ENCODE measurements at regions of chr12 and their contacts with region 1.

Region 1: DNA sequence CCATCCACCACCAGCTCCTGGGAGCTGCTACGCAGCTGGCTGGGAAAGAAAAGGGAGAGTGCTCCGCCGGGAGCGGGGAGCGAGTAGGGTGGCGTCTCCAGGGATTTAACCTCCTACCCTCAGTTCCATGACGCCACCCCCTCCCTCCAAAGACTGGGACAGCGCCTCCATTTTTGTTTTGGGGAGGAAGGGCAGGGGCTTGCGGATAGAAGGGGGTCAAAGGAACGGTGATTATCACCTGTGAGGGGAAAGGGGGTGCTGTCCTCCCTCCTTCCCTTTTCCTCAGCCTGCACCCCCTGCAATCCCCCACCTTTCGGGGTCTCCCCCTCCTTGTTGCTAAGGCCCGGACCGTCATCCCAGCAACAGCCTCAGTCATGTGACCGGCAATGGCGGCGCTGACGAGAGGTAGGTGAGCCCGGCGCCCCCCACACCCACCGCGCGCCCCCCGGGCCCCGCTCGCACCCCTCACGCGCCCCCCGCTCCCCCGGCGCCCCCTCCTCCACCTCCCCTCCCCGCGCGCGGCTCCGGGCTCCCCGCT is at the start of gene DTX3:
- DNase-seq: peak in 6 of 9 donors; percentile 31 to 51 (median 43)
- ATAC-seq: peak; percentile 68
- H3K4me3 ChIP-seq: peak within 1 kb of the TSS; percentile 71
- H3K4me3 Mint-ChIP-seq: peak within 1 kb of the TSS; percentile 81 to 91 (median 86)
- H3K27ac ChIP-seq: peak within 1 kb of the TSS; percentile 70
- H3K27ac Mint-ChIP-seq: peak within 1 kb of the TSS; percentile 84 to 93 (median 87)
- H3K4me1 ChIP-seq: peaks cover 19 to 20% of the 10 kb centered on the region in 2 donors
- H3K4me1 Mint-ChIP-seq: peaks cover 20 to 40% (median 32%) of the 10 kb centered on the region in 7 donors
- H3K27me3 ChIP-seq: no peaks in the 10 kb centered on the region
- H3K27me3 Mint-ChIP-seq: peaks cover 0 to 2% (median 0%) of the 10 kb centered on the region in 5 donors
- total RNA-seq, gene DTX3: 25.1 to 42.5 (median 35.6) TPM

Region 2: GRCh38 chr12:57590536-57591479 is 13.7 kb before region 1 on chr12 and contains the start of gene PIP4K2C:
- CTCF ChIA-PET with region 1: interaction called, 3 read pairs
- POLR2A ChIA-PET with region 1: interaction called, 5 read pairs
- intact Hi-C with region 1: loop called (anchors 1 to 2 kb)
- DNase-seq: peak; percentile 49 to 79 (median 65)
- ATAC-seq: peak; percentile 95
- H3K4me3 ChIP-seq: peak within 1 kb of the TSS; percentile 83
- H3K4me3 Mint-ChIP-seq: peak within 1 kb of the TSS; percentile 84 to 92 (median 89)
- H3K27ac ChIP-seq: peak within 1 kb of the TSS; percentile 76
- H3K27ac Mint-ChIP-seq: peak within 1 kb of the TSS; percentile 79 to 94 (median 91)
- H3K4me1 ChIP-seq: peaks cover 14 to 21% of the 10 kb centered on the region in 2 donors
- H3K4me1 Mint-ChIP-seq: peaks cover 24 to 35% (median 26%) of the 10 kb centered on the region in 7 donors
- H3K27me3 ChIP-seq: no peaks in the 10 kb centered on the region
- H3K27me3 Mint-ChIP-seq: peaks cover 0 to 3% (median 0%) of the 10 kb centered on the region in 5 donors
- total RNA-seq, gene PIP4K2C: 20.1 to 29.7 (median 21.9) TPM

Measured in naive thymus-derived CD4-positive, alpha-beta T cell (primary cell).